IMR-90 (cell line): ENCODE measurements at regions of chr3 and their contacts with region 1.

Region 1: DNA sequence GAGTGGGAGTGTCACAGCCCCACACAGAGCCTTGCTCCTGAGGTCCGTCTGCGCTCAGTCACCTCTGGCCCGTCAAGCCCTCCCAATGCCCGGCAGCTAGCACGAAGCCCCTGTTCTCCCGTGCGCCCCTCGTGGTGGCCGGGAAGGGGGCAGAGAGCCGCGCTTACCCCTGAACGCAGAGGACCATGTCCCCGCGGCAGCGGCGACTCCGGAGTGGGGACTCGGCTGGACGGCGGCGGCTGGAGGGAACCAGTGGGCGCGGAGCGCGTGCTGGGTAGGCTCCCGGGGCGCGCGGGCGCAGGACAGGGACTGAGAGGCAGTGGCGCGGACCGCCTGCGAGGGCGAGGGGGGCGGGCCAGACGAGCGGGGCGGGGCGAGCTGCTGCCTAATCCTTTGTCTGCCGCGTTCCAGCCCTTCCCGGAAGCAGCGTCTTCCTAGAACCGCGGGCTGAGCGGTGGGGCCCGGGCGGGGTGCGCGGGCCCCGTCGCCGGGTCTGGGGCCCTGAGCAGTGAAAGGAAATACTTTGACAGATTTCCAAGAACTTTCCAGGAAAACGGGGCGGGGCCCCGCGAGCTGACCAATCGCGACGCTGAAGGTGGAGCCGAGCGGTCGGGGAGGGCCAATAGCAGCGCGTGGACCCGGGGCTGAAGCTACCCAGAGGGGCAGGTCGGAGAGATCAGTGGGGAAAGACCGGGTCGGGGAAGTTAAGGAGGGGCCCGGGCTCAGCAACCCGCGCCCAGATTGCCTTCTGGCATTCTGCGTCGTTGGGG is at the start of gene CISH:
- DNase-seq: peak; percentile 91
- ATAC-seq: peak; percentile 82
- H3K4me3 ChIP-seq: peak within 1 kb of the TSS; percentile 81
- H3K27ac ChIP-seq: peak within 1 kb of the TSS; percentile 79
- H3K4me1 ChIP-seq: peaks cover 4% of the 10 kb centered on the region
- H3K27me3 ChIP-seq: no peaks in the 10 kb centered on the region
- CTCF ChIP-seq: peak; percentile 44
- POLR2A ChIP-seq: 0 out of 2 replicates have a peak, but pooled peaks have one; percentile 38
- RAD21 ChIP-seq: peak; percentile 31; the same call in 1 of the 2 replicates
- total RNA-seq, gene CISH: 0.83 and 0.90 TPM in 2 replicates

Region 2: GRCh38 chr3:50568947-50569749 is 42.5 kb before region 1 on chr3 and contains the start of gene HEMK1:
- CTCF ChIA-PET with region 1: interaction called, 20 read pairs
- POLR2A ChIA-PET with region 1: interaction called, 8 read pairs
- dilution Hi-C with region 1: no loop called
- in situ Hi-C with region 1: loop called (anchors 5 kb)
- intact Hi-C with region 1: loop called (anchors 1 kb)
- DNase-seq: peak; percentile 91
- ATAC-seq: peak; percentile 81
- H3K4me3 ChIP-seq: peak within 1 kb of the TSS; percentile 78
- H3K27ac ChIP-seq: peak within 1 kb of the TSS; percentile 96
- H3K4me1 ChIP-seq: peaks cover 5% of the 10 kb centered on the region
- H3K27me3 ChIP-seq: no peaks in the 10 kb centered on the region
- CTCF ChIP-seq: no peak
- POLR2A ChIP-seq: peak; percentile 69
- RAD21 ChIP-seq: no peak
- total RNA-seq, gene HEMK1: 12.5 and 17.2 TPM in 2 replicates

Region 3: GRCh38 chr3:50971487-50971924 is 359.9 kb after region 1 on chr3:
- CTCF ChIA-PET with region 1: interaction called, 3 read pairs
- POLR2A ChIA-PET with region 1: no interaction called
- dilution Hi-C with region 1: no loop called
- in situ Hi-C with region 1: no loop called
- intact Hi-C with region 1: loop called (anchors 2 kb)
- DNase-seq: peak; percentile 45
- ATAC-seq: peak; percentile 81
- H3K4me3 ChIP-seq: no peak overlapping the region
- H3K27ac ChIP-seq: no peak overlapping the region
- H3K4me1 ChIP-seq: no peaks in the 10 kb centered on the region
- H3K27me3 ChIP-seq: no peaks in the 10 kb centered on the region
- CTCF ChIP-seq: peak; percentile 74
- POLR2A ChIP-seq: no peak
- RAD21 ChIP-seq: peak; percentile 70

Region 4: GRCh38 chr3:51371943-51372557 is 760.4 kb after region 1 on chr3:
- CTCF ChIA-PET with region 1: interaction called, 6 read pairs
- POLR2A ChIA-PET with region 1: no interaction called
- dilution Hi-C with region 1: no loop called
- in situ Hi-C with region 1: loop called (anchors 5 kb)
- intact Hi-C with region 1: loop called (anchors 1 kb)
- DNase-seq: peak; percentile 76
- ATAC-seq: peak; percentile 89
- H3K4me3 ChIP-seq: no peak overlapping the region
- H3K27ac ChIP-seq: no peak overlapping the region
- H3K4me1 ChIP-seq: no peaks in the 10 kb centered on the region
- H3K27me3 ChIP-seq: peaks cover 6% of the 10 kb centered on the region
- CTCF ChIP-seq: peak; percentile 87
- POLR2A ChIP-seq: no peak
- RAD21 ChIP-seq: peak; percentile 93

Region 5: GRCh38 chr3:51498876-51499738 is 887.5 kb after region 1 on chr3:
- CTCF ChIA-PET with region 1: interaction called, 3 read pairs
- POLR2A ChIA-PET with region 1: no interaction called
- dilution Hi-C with region 1: no loop called
- in situ Hi-C with region 1: no loop called
- intact Hi-C with region 1: loop called (anchors 5 kb)
- DNase-seq: peak; percentile 89
- ATAC-seq: peak; percentile 73
- H3K4me3 ChIP-seq: peak overlapping the region; percentile 80
- H3K27ac ChIP-seq: peak overlapping the region; percentile 84
- H3K4me1 ChIP-seq: no peaks in the 10 kb centered on the region
- H3K27me3 ChIP-seq: no peaks in the 10 kb centered on the region
- CTCF ChIP-seq: no peak
- POLR2A ChIP-seq: peak; percentile 55; the same call in 1 of the 2 replicates
- RAD21 ChIP-seq: no peak